PC-9 (cell line): ENCODE measurements at regions of chr14 and their contacts with region 1.

Region 1: GRCh38 chr14:32019276-32019675 is 57.8 kb upstream of the ARHGAP5 start:
- DNase-seq: no peak
- H3K4me3 ChIP-seq: no peak overlapping the region
- H3K27ac ChIP-seq: no peak overlapping the region
- H3K4me1 ChIP-seq: peaks cover 9% of the 10 kb centered on the region
- H3K27me3 ChIP-seq: no peaks in the 10 kb centered on the region
- CTCF ChIP-seq: no peak

Region 2: GRCh38 chr14:32033543-32033942 is 14.3 kb after region 1 on chr14:
- CTCF ChIA-PET with region 1: no interaction called
- POLR2A ChIA-PET with region 1: no interaction called
- intact Hi-C with region 1: no loop called
- DNase-seq: no peak
- H3K4me3 ChIP-seq: no peak overlapping the region
- H3K27ac ChIP-seq: no peak overlapping the region
- H3K4me1 ChIP-seq: 0 out of 2 replicates have a peak, but pooled peaks cover 1% of the 10 kb centered on the region
- H3K27me3 ChIP-seq: no peaks in the 10 kb centered on the region
- CTCF ChIP-seq: no peak

Region 3: GRCh38 chr14:32330351-32331111 is 311.3 kb after region 1 on chr14:
- CTCF ChIA-PET with region 1: no interaction called
- POLR2A ChIA-PET with region 1: interaction called, 15 read pairs
- intact Hi-C with region 1: no loop called
- DNase-seq: no peak
- H3K4me3 ChIP-seq: no peak overlapping the region
- H3K27ac ChIP-seq: no peak overlapping the region
- H3K4me1 ChIP-seq: no peaks in the 10 kb centered on the region
- H3K27me3 ChIP-seq: no peaks in the 10 kb centered on the region
- CTCF ChIP-seq: no peak